B cell (primary cell): ENCODE measurements at regions of chr20 and their contacts with region 1.

Region 1: DNA sequence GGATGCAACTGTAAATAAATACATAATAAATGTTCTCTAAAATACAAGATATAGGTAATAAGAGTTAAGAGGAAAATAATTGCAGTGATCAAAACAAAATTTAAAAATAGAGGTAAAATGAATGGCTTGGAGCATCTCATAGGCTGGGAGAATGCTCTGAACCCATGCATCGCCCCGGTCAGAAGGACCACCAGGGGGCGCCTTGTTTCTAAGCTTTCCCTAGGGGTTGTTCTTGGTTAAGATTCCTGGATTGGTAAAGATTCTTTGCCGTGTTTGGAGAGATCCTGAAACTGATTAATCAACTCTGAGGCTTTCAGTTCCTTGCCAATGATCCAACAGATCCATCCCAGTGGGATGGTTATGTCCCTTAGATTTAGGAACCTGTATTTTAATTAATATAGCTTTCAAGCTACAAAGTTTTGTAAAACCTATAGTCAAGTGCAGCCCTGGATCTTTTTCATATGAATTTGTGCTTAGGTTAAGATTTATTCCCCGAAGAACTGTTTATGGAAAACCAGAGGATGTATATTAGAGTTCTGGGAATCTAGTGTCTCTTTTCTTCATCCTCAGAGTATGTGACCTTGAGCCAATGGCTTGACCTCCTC is 45.3 kb upstream of the PRELID3B start:
- DNase-seq: peak; percentile 83
- ATAC-seq: peak; percentile 68
- H3K4me3 ChIP-seq: no peak overlapping the region
- H3K4me3 Mint-ChIP-seq: no peak overlapping the region
- H3K27ac ChIP-seq: no peak overlapping the region
- H3K27ac Mint-ChIP-seq: no peak overlapping the region
- H3K4me1 ChIP-seq: peaks cover 8% of the 10 kb centered on the region in 2 donors
- H3K4me1 Mint-ChIP-seq: peaks cover 5% of the 10 kb centered on the region
- H3K27me3 ChIP-seq: peaks cover 0 to 7% (median 0%) of the 10 kb centered on the region in 4 experiments
- H3K27me3 Mint-ChIP-seq: peaks cover 16% of the 10 kb centered on the region
- CTCF ChIP-seq: peak; percentile 98

Region 2: DNA sequence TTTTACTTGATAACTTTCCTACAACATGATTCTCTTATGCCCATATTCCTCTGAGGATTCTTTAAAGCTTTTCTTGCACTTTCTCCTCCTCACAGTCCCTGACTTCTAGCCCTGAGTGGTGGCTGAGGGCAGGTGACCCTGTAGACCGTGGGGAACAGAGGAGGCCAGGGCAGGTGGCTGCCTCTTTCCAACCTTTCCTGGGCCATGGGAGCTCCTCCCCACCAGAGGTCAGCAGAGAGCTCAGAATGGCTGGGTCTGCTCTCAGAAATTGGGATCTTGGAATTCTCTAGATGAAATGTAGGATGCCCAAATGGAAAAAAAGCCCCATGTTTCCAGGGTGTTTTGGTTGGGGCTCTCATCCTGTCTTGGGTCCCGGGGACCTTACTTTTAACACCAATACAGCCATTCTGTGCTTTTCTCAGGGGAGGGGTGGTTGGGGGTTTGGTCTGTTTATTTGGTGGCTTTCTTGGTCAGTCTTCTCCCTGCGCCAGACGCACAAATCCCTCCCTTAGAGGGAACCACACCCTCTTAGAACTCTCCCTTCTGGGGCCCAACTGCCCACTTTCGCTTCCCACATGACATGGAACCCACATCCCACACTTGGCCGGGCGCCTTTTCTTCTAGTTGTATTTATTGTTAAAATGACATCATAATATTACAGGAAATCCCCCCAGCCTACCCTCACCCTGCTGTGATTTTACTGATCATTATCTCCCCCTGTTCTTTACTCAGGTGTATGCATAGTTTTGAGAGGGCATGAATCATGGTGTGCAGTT is 217.5 kb before region 1 on chr20:
- CTCF ChIA-PET with region 1: interaction called, 18 read pairs
- POLR2A ChIA-PET with region 1: no interaction called
- intact Hi-C with region 1: loop called (anchors 1 kb)
- DNase-seq: peak; percentile 69
- ATAC-seq: peak; percentile 78
- H3K4me3 ChIP-seq: no peak overlapping the region
- H3K4me3 Mint-ChIP-seq: no peak overlapping the region
- H3K27ac ChIP-seq: no peak overlapping the region
- H3K27ac Mint-ChIP-seq: no peak overlapping the region
- H3K4me1 ChIP-seq: peaks cover 5 to 9% of the 10 kb centered on the region in 2 donors
- H3K4me1 Mint-ChIP-seq: peaks cover 12% of the 10 kb centered on the region
- H3K27me3 ChIP-seq: peaks cover 0 to 4% (median 1%) of the 10 kb centered on the region in 4 experiments
- H3K27me3 Mint-ChIP-seq: peaks cover 8% of the 10 kb centered on the region
- CTCF ChIP-seq: peak; percentile 78

Region 3: GRCh38 chr20:59071216-59071615 is 16.7 kb before region 1 on chr20:
- CTCF ChIA-PET with region 1: interaction called, 13 read pairs
- POLR2A ChIA-PET with region 1: no interaction called
- intact Hi-C with region 1: no loop called
- DNase-seq: peak; percentile 66
- ATAC-seq: peak; percentile 69
- H3K4me3 ChIP-seq: no peak overlapping the region
- H3K4me3 Mint-ChIP-seq: no peak overlapping the region
- H3K27ac ChIP-seq: no peak overlapping the region
- H3K27ac Mint-ChIP-seq: peak overlapping the region; percentile 82
- H3K4me1 ChIP-seq: peaks cover 8 to 11% of the 10 kb centered on the region in 2 donors
- H3K4me1 Mint-ChIP-seq: peaks cover 14% of the 10 kb centered on the region
- H3K27me3 ChIP-seq: peaks cover 0 to 3% (median 0%) of the 10 kb centered on the region in 4 experiments
- H3K27me3 Mint-ChIP-seq: peaks cover 19% of the 10 kb centered on the region
- CTCF ChIP-seq: no peak

Region 4: DNA sequence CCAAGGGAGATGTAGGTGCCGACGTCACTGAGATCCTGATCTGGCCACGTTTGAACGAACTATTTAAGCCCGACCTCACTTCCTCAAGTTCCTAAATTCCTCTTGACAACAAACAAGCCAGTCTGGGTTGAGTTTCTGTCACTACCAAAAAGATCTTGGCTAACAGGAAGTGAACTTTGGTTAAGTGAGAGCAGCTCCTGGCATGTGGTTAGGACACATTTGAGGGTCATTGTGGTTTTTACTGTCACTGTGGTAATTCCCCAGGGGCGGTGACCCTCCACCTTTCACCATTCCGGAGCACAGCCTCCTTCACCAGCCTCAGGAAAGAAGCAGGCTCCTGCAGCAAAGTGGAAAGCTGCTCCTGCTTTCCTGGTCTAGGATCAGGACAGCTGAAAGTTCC is 32.6 kb after region 1 on chr20:
- CTCF ChIA-PET with region 1: interaction called, 58 read pairs
- POLR2A ChIA-PET with region 1: no interaction called
- intact Hi-C with region 1: loop called (anchors 1 kb)
- DNase-seq: peak; percentile 48
- ATAC-seq: no peak
- H3K4me3 ChIP-seq: no peak overlapping the region
- H3K4me3 Mint-ChIP-seq: peak overlapping the region; percentile 91
- H3K27ac ChIP-seq: no peak overlapping the region
- H3K27ac Mint-ChIP-seq: peak overlapping the region; percentile 98
- H3K4me1 ChIP-seq: peaks cover 58 to 60% of the 10 kb centered on the region in 2 donors
- H3K4me1 Mint-ChIP-seq: peaks cover 68% of the 10 kb centered on the region
- H3K27me3 ChIP-seq: no peaks in the 10 kb centered on the region
- H3K27me3 Mint-ChIP-seq: no peaks in the 10 kb centered on the region
- CTCF ChIP-seq: no peak

Region 5: GRCh38 chr20:59177261-59178250 is 89.6 kb after region 1 on chr20:
- CTCF ChIA-PET with region 1: interaction called, 16 read pairs
- POLR2A ChIA-PET with region 1: no interaction called
- intact Hi-C with region 1: no loop called
- DNase-seq: no peak
- ATAC-seq: no peak
- H3K4me3 ChIP-seq: peak overlapping the region in 1 of 5 experiments; percentile 5
- H3K4me3 Mint-ChIP-seq: peak overlapping the region; percentile 31
- H3K27ac ChIP-seq: peak overlapping the region; percentile 42 to 50
- H3K27ac Mint-ChIP-seq: peak overlapping the region; percentile 51
- H3K4me1 ChIP-seq: peaks cover 20 to 25% of the 10 kb centered on the region in 2 donors
- H3K4me1 Mint-ChIP-seq: peaks cover 38% of the 10 kb centered on the region
- H3K27me3 ChIP-seq: no peaks in the 10 kb centered on the region
- H3K27me3 Mint-ChIP-seq: no peaks in the 10 kb centered on the region
- CTCF ChIP-seq: no peak

Region 6: DNA sequence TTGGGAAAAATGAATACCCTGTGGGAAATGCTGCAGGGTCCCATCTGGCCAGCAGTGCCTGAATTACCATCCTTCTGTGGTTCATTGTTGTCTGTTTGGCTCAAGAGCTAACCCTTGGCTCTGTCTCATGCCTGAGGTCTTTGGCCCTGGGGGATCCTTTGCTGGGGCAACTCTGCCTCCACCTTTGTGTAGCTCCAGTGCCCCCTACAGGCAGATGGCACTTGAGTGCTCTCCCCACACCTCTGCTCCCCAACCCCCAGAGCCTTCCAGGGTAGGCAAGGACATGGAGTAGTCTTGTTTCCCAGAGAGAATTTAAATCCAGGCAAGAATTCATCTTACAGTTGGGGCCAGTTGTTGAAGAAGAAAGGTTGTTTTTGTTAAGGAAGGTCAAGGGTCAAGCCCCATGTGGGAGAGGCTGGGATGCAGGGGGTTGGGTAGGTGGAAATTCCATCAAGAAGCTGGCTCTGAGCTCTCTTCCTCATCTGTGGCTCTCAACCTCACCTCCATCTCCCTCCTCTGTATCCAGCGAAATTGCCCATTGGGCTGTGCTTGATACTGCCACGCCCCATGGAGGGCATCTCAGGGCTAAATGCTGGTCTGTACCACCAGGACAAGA is 119.9 kb after region 1 on chr20:
- CTCF ChIA-PET with region 1: interaction called, 435 read pairs
- POLR2A ChIA-PET with region 1: interaction called, 4 read pairs
- intact Hi-C with region 1: loop called (anchors 1 kb)
- DNase-seq: peak; percentile 85
- ATAC-seq: peak; percentile 99
- H3K4me3 ChIP-seq: no peak overlapping the region
- H3K4me3 Mint-ChIP-seq: no peak overlapping the region
- H3K27ac ChIP-seq: no peak overlapping the region
- H3K27ac Mint-ChIP-seq: no peak overlapping the region
- H3K4me1 ChIP-seq: peaks cover 6 to 7% of the 10 kb centered on the region in 2 donors
- H3K4me1 Mint-ChIP-seq: peaks cover 7% of the 10 kb centered on the region
- H3K27me3 ChIP-seq: no peaks in the 10 kb centered on the region
- H3K27me3 Mint-ChIP-seq: no peaks in the 10 kb centered on the region
- CTCF ChIP-seq: peak; percentile 91

Region 7: GRCh38 chr20:59242714-59243113 is 154.8 kb after region 1 on chr20:
- CTCF ChIA-PET with region 1: no interaction called
- POLR2A ChIA-PET with region 1: no interaction called
- intact Hi-C with region 1: no loop called
- DNase-seq: no peak
- ATAC-seq: no peak
- H3K4me3 ChIP-seq: no peak overlapping the region
- H3K4me3 Mint-ChIP-seq: no peak overlapping the region
- H3K27ac ChIP-seq: no peak overlapping the region
- H3K27ac Mint-ChIP-seq: no peak overlapping the region
- H3K4me1 ChIP-seq: no peaks in the 10 kb centered on the region
- H3K4me1 Mint-ChIP-seq: no peaks in the 10 kb centered on the region
- H3K27me3 ChIP-seq: no peaks in the 10 kb centered on the region
- H3K27me3 Mint-ChIP-seq: no peaks in the 10 kb centered on the region
- CTCF ChIP-seq: no peak